PC-3 (cell line): ENCODE measurements at regions of chr12 and their contacts with region 1.

Region 1: GRCh38 chr12:88633312-88633711 is 53.0 kb upstream of the KITLG start:
- DNase-seq: peak; percentile 50
- ATAC-seq: no peak
- H3K4me3 ChIP-seq: no peak overlapping the region
- H3K27ac ChIP-seq: no peak overlapping the region
- H3K4me1 ChIP-seq: no peaks in the 10 kb centered on the region
- H3K27me3 ChIP-seq: no peaks in the 10 kb centered on the region
- CTCF ChIP-seq: peak; percentile 74

Region 2: DNA sequence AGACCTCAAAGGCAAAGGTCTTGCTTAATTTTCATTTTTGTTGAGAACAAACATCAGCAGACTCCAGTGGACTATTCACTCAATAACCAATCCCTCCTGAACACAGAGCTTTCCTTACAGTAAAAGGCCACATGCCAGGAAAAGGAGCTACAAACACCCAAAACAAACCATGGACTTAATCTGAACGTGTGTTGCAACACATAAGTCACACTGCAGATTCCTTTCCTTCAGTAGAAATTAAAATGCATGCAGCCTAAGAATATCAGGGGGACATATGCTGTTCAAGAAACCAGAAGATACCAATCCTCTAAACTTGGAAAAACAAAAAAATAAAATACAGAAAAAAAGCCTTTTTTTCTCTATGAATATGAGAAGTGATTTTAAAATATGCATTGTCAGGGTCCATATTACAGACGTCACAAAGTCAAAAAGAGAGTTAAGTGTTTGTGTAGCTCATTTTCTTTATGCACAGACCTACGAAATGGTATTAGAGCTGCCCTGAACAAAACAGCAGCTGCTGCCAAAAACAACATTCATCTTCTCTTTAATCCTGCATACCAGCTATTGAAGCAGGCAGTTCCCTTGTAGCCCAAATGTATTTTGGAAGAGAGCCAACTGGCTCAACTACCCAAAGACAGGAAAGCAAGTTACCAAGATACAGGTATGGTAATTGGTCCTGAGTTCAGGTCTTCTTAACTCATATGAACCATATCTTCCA is 79.2 kb before region 1 on chr12:
- CTCF ChIA-PET with region 1: no interaction called
- POLR2A ChIA-PET with region 1: no interaction called
- intact Hi-C with region 1: loop called (anchors 2 kb)
- DNase-seq: peak; percentile 92
- ATAC-seq: peak; percentile 44
- H3K4me3 ChIP-seq: no peak overlapping the region
- H3K27ac ChIP-seq: peak overlapping the region; percentile 83
- H3K4me1 ChIP-seq: peaks cover 38% of the 10 kb centered on the region
- H3K27me3 ChIP-seq: no peaks in the 10 kb centered on the region
- CTCF ChIP-seq: no peak

Region 3: GRCh38 chr12:88793096-88793495 is 159.8 kb after region 1 on chr12:
- CTCF ChIA-PET with region 1: no interaction called
- POLR2A ChIA-PET with region 1: no interaction called
- intact Hi-C with region 1: no loop called
- DNase-seq: peak; percentile 17
- ATAC-seq: no peak
- H3K4me3 ChIP-seq: no peak overlapping the region
- H3K27ac ChIP-seq: no peak overlapping the region
- H3K4me1 ChIP-seq: no peaks in the 10 kb centered on the region
- H3K27me3 ChIP-seq: no peaks in the 10 kb centered on the region
- CTCF ChIP-seq: no peak

Region 4: DNA sequence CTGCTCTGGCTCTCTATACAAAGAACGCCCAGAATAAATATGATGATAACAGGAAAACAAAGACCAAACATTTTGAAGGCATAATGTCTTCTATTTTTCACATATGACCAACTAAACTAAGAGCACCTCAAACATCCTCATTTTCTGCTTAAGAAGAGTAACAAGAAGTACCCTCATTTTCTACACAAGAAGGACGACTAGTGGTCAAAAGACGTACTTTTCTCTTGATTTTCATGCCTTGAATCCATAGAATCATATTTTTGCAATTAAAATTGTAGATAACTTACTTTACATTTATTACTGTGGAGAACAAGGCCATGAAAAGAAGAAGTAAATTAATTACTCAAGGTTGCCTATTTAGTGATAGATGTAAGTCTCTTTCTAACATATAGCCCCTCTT is 360.3 kb after region 1 on chr12:
- CTCF ChIA-PET with region 1: no interaction called
- POLR2A ChIA-PET with region 1: no interaction called
- intact Hi-C with region 1: loop called (anchors 1 kb)
- DNase-seq: peak; percentile 80
- ATAC-seq: peak; percentile 77
- H3K4me3 ChIP-seq: no peak overlapping the region
- H3K27ac ChIP-seq: no peak overlapping the region
- H3K4me1 ChIP-seq: peaks cover 11% of the 10 kb centered on the region
- H3K27me3 ChIP-seq: no peaks in the 10 kb centered on the region
- CTCF ChIP-seq: peak; percentile 87